Psoas muscle (tissue), 8 donors: ENCODE measurements at regions of chr19 and their contacts with region 1.

Region 1: DNA sequence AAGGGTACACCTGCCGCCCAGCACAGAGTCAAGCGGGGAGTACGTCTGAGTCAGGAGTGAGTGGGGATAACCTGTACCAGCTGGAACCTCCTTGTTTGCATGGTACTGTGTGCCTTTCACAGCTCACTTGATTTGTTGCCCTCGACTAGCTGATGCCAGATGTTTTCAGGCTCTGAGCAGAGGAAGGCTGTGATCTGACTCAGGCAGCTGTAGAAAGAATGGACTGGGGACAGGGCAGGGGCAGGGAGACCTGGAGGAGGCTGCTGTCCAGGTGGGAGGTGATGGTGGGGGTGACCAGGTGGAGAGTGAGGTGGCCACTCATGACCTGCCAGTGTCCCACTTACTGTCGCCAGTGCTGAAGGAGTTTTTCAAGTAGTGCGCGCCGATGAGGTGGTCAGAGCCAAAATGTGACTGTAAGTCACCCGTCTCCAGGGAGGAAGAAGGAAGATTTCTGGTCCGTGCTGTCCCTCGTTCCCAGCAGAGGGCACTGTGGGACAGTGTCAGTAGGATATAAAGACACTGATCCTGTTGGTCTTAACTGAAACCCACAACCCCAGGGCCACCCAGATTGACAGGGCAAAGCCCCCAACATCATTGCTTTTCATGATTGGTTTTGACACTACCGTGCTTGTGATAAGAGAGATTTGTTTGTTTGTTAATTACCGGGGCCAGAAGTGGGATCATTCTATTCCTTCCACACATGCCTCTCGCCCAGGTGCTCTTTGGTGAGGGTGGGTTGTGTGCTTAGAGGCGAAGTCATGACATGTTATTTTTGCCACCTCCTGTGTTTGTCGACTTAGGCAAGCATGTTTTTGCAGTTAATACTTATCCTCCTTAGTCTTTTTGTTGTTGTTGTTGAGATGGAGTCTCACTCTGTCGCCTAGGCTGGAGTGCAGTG is 128.4 kb downstream of the DPF1 start:
- DNase-seq: peak; percentile 64 to 83
- ATAC-seq: peak; percentile 68 to 88 (median 74)
- H3K4me3 ChIP-seq: no peak overlapping the region
- H3K27ac ChIP-seq: no peak overlapping the region
- H3K4me1 ChIP-seq: peaks cover 2% of the 10 kb centered on the region
- H3K27me3 ChIP-seq: no peaks in the 10 kb centered on the region
- CTCF ChIP-seq: peak; percentile 63

Region 2: DNA sequence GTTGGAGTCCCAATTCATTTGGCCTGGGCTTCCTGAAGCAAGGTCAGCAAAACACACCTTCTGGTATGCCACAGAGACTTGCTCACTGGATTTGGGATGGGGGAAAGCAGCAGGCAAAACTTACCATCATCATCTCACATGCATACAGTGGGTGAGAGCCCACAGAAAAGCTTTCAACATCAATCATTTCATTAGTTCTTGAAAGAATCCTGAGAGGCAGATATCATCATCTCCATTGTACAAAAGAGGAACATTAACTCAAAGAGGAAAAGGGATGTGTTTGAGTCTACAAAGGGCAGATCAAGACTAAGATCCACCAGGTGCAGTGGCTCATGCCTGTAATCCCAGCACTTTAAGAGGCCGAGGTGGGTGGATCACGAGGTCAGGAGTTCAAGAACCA is 195.7 kb before region 1 on chr19:
- intact Hi-C with region 1: loop called (anchors 2 to 5 kb)
- DNase-seq: no peak
- ATAC-seq: no peak
- H3K4me3 ChIP-seq: no peak overlapping the region
- H3K27ac ChIP-seq: no peak overlapping the region
- H3K4me1 ChIP-seq: no peaks in the 10 kb centered on the region
- H3K27me3 ChIP-seq: no peaks in the 10 kb centered on the region
- CTCF ChIP-seq: no peak

Region 3: GRCh38 chr19:38134540-38135149 is 39.0 kb after region 1 on chr19:
- intact Hi-C with region 1: loop called in 1 of 2 experiments (anchors 5 kb)
- DNase-seq: no peak
- ATAC-seq: peak; percentile 39 to 72 (median 66)
- H3K4me3 ChIP-seq: no peak overlapping the region
- H3K27ac ChIP-seq: peak overlapping the region; percentile 70
- H3K4me1 ChIP-seq: peaks cover 15% of the 10 kb centered on the region
- H3K27me3 ChIP-seq: no peaks in the 10 kb centered on the region
- CTCF ChIP-seq: peak; percentile 44

Region 4: DNA sequence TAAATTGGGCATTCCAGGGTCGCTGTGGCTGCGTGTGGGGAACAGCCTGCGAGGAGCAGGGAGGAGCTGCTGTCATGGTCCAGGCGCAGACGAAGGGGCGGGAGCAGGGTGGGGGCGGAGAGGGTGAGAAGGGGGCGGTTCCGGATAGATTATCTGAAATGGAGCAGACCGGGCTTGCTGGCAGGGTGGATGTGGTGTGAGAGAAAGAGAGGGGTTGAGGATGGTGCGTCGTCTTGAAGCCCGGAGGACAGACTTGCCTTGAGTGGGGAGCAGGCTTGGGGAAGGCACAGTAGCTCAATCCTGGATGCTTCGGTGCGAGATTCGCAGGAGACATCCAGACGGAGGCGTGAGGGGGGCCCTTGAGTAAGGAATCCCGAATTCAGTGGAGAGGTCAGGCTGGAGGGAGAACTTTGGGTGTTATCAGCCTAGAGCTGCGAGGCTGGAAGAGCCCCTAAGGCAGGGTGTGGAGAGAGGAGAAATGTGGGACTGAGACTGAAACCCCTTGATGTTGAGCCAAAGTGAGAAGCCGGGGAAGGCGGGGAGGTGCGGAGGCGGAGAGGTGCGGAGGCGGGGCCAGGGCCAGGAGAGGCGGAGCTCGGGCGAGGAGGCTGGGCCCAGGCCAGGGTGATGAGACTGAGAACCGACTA is 87.7 kb after region 1 on chr19:
- intact Hi-C with region 1: no loop called
- DNase-seq: peak; percentile 41 to 67
- ATAC-seq: peak; percentile 25 to 63 (median 38)
- H3K4me3 ChIP-seq: peak overlapping the region; percentile 30
- H3K27ac ChIP-seq: peak overlapping the region; percentile 53
- H3K4me1 ChIP-seq: no peaks in the 10 kb centered on the region
- H3K27me3 ChIP-seq: no peaks in the 10 kb centered on the region
- CTCF ChIP-seq: no peak